Mammary epithelial cell (primary cell): ENCODE measurements at regions of chr7 and their contacts with region 1.

Region 1: GRCh38 chr7:81684513-81685269 is 85.2 kb downstream of the HGF start:
- DNase-seq: peak; percentile 98
- H3K4me3 ChIP-seq: no peak overlapping the region
- H3K27ac ChIP-seq: peak overlapping the region; percentile 49
- H3K4me1 ChIP-seq: peaks cover 25% of the 10 kb centered on the region
- H3K27me3 ChIP-seq: no peaks in the 10 kb centered on the region
- CTCF ChIP-seq: no peak

Region 2: DNA sequence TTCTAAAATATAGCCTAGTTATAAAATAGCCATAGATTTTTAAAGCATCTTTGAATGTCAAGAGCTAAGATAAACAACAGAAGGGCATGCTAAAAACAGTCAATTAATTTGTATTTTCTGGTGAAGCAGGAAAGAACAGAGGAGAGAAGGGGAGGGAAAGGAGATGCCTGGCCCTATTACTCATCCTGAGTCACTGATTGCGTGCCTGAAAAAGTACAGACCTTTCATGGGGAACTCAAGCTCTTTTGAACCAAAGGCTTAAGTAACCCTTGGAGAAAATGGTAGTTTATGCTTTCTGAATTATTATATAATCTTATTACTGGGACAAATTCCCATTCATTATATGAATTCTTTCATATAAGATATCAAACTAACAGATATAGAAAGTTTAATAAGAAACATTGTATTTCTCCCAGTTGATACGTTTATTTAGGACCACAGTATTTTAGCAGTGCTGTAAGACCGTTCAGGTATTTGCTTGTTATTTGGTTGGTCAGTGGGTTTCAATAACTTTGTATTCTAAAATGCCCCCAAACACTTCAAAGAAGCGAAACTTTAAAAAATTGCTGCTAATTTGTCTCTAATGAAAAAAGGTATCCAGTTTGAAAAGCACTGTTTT is 66.2 kb before region 1 on chr7:
- CTCF ChIA-PET with region 1: no interaction called
- dilution Hi-C with region 1: no loop called
- in situ Hi-C with region 1: no loop called
- intact Hi-C with region 1: loop called (anchors 5 kb)
- DNase-seq: peak; percentile 92
- H3K4me3 ChIP-seq: no peak overlapping the region
- H3K27ac ChIP-seq: peak overlapping the region; percentile 53
- H3K4me1 ChIP-seq: peaks cover 29% of the 10 kb centered on the region
- H3K27me3 ChIP-seq: no peaks in the 10 kb centered on the region
- CTCF ChIP-seq: no peak

Region 3: GRCh38 chr7:81725812-81726127 is 41.1 kb after region 1 on chr7:
- CTCF ChIA-PET with region 1: no interaction called
- dilution Hi-C with region 1: no loop called
- in situ Hi-C with region 1: no loop called
- intact Hi-C with region 1: no loop called
- DNase-seq: no peak
- H3K4me3 ChIP-seq: no peak overlapping the region
- H3K27ac ChIP-seq: no peak overlapping the region
- H3K4me1 ChIP-seq: no peaks in the 10 kb centered on the region
- H3K27me3 ChIP-seq: peaks cover 2% of the 10 kb centered on the region
- CTCF ChIP-seq: no peak